KBM-7 (cell line): ENCODE measurements at regions of chr9 and their contacts with region 1.

Region 1: DNA sequence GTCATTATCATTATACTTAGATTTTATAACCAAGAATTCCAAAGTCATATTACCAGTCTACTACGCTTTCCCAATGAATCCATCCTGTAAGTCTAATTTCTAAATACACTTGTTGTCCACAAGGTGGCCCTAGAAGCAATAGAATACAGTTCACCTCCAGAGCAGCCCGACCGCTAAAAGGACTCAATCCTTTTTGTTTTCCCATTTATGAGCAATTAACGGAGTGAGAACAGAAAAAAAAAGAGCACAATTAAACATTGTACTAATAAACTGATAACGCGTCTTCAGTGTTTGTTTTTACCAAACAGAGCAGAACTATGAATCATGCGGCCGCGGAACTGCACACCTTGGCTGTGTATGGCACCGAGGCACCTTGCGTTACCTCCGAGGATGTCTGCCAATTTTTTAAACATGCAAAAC is 160.7 kb upstream of the DAPK1 start:
- DNase-seq: peak; percentile 58

Region 2: DNA sequence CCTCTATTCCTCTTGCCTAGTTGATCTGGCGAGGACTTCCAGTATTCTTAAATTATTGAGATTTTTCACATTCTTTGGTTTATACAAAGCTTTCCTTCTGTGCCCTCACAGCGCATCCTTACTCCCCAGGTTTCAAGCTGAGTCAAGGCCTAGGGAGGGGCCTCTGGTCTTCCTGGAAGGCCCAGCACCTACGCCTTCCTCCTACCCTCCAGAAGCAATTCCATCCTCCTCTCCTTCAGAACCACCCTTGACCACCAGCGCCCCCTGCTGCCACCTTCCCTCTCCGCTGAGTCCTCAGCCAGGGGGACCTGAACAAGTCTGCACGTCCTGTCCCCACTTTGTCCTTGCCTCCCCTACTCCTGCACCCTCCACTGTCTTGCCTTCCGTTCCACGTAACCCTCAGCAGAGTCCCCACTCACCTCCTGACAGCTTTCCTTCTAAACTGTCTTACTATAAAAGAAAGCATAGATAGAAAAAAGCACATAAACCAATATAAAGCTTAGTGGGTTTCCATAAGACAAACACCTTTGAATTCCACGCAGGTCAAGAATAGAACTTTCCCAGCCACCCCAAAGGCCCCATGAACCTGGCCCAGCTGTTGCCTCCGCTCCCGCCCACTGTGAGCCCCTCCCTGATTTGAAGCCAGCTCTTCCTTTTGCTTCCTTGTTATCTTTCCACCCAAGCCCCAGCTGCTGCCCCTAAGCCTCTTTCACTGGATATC is 326.0 kb after region 1 on chr9:
- in situ Hi-C with region 1: loop called (anchors 25 kb)
- DNase-seq: peak; percentile 77

Region 3: DNA sequence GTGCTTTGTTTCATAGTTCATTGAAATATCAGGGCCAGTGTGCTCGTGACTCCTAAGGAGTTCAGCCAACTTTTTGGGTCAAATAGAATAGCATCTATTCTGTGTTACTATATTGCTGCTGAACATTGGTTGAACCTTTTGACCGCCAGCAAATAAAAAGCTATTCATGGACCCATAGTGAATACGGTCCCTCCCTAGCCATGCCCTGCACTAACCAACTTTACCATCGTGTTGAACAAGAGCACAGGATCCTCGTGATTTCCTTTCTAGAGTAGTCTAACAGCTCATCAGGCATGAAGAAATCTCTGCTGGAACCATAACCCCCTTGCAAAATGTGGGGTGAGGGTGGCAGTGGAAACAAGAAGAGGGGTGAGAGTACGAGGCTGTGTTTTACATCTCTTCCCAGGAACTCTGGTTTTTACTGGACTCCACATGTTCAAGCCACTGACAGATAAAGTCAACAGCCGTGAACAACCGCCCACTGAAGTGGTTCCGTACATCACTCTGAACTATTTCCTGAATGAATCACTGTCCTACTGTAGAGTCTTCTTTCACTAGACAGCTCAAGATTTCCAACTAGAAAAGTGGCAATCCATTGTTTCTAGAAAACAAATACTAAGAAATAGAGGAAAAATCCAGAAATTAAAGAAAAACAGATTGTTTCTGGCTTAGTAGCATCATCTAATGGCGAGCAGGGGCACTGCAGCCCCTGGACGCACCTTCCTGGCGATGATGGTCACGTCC is 475.6 kb after region 1 on chr9:
- in situ Hi-C with region 1: loop called (anchors 25 kb)
- DNase-seq: peak; percentile 35